Right ventricle myocardium inferior (tissue), 1 donor: ENCODE measurements at regions of chr1 and their contacts with region 1.

Region 1: GRCh38 chr1:155961937-155962336 is 16.4 kb downstream of the ARHGEF2 start:
- DNase-seq: peak; percentile 83
- ATAC-seq: peak; percentile 39

Region 2: DNA sequence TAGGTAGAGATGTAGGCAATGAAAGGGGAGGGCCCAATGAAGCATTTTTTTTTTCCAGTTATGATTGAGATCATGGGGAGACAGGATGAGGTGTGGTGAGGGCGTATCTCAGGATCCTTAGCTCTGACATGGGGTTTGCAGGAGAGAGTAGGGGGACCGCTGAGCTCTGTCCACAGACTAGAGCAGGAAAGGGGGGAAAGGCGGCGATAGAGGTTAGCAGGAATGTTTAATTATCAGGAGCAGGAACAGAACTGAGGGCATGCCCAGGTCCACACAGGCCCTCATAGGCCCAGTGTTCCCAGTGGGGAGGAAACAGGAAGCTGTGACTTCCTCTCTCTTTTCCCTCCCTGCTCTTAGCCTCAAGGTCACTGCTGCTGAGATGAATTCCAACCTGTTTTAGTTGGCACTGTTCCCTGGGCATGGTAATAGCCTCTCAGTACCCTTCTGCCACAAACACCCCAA is 21.4 kb before region 1 on chr1:
- intact Hi-C with region 1: loop called (anchors 2 kb)
- DNase-seq: no peak
- ATAC-seq: peak; percentile 68

Region 3: GRCh38 chr1:155978325-155978972 is 16.5 kb after region 1 on chr1 and contains the start of gene ARHGEF2:
- intact Hi-C with region 1: loop called (anchors 2 kb)
- DNase-seq: peak; percentile 94
- ATAC-seq: peak; percentile 71
- total RNA-seq, gene ARHGEF2: 61.8 TPM

Region 4: GRCh38 chr1:155989242-155990004 is 27.5 kb after region 1 on chr1:
- intact Hi-C with region 1: loop called (anchors 5 kb)
- DNase-seq: peak; percentile 86
- ATAC-seq: peak; percentile 88